ENCODE measurements at regions of chr7 and their contacts with region 1.

Region 1: DNA sequence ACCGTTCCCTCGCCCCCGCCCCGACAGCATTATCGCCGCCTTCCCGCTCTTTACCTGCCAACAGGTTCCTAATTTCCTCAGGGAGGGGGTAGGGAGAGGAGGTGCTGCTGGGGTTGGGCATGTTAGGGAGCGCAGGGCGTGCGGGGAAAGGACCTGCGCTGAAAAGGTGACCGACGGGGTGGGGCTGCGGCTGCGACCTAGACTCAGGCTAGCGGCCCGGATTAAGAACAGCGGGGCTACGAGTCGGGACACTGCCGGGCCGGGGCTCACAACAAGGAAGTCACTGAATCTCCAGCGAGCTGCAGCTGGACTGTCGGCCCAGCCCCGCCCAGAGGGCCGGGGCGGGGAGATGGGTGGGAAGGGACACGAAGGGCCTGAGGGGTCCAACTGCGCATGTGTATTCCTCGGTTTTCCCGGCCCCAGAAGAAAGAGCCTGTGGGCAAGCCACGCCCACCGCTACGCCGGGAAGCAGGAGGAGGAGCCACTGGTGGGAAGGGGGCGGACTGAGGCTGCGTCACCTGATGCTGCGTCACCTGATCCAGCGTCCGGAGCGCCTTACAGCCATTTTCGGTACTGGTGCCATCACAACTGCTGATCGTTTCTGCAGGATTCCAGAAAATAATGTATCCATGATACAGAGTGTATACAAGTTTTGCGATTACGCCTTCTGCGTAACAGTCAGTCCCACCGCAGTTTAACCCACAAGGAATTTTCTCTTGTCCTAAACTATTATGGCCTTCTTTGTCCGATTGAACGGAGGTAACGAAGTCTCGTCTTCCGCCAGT is at the start of gene SKAP2:
- DNase-seq: peak; percentile 83
- H3K4me3 Mint-ChIP-seq: peak within 1 kb of the TSS; percentile 93
- H3K27ac Mint-ChIP-seq: peak within 1 kb of the TSS; percentile 78
- H3K4me1 Mint-ChIP-seq: peaks cover 21% of the 10 kb centered on the region
- H3K27me3 Mint-ChIP-seq: peaks cover 29% of the 10 kb centered on the region
- total RNA-seq, gene SKAP2: 3.2 and 3.3 TPM in 2 replicates

Region 2: GRCh38 chr7:25527665-25528170 is 1336.8 kb before region 1 on chr7:
- intact Hi-C with region 1: no loop called
- DNase-seq: no peak
- H3K4me3 Mint-ChIP-seq: no peak overlapping the region
- H3K27ac Mint-ChIP-seq: no peak overlapping the region
- H3K4me1 Mint-ChIP-seq: peaks cover 8% of the 10 kb centered on the region
- H3K27me3 Mint-ChIP-seq: peaks cover 12% of the 10 kb centered on the region

Region 3: DNA sequence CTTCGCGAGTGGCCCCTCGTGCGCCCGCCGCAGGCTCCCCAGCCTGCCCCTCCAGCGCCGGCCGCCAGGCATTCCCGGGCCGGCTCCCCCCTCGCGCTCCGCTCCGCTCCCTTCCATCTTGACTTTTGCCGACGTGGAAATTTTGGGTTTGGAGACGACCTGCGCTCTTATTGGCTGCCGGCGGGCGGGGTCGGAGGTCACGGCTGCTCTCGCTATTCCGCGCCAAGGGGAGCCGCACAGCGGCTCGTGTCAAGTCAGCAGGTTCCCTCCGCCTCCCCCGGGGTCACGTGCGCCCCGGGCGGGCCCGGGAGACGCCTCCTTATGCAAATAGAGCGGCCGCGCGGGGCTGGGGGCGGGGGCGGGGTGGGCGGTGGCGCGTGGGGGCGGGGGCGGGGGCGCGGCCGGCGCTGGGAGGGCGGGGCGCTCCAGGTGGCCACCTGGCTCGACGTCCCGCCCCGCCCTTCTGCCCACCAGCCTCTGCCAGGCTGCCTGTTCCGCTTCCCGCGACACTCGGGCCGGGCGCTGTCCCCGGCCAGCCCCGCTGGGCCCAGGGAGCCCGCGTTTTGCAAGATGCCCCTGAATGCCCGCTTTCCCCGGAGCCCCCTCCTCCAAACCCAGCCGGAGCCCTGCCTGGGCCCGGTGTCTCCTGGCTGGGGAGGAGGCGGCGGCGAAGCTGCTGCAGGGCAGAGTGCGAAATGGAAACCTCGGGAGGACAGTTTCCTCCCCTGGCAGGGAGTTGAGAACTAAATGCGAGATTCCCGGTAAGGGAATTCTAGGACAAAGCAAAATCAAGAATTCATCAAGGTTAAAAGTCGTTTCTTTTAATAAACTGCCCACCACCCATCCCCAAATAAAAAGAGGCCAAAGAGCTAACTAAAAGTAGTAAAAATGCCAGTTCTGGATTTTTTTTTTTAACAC is 913.2 kb before region 1 on chr7:
- intact Hi-C with region 1: loop called (anchors 10 kb)
- DNase-seq: peak; percentile 87
- H3K4me3 Mint-ChIP-seq: peak overlapping the region; percentile 91
- H3K27ac Mint-ChIP-seq: peak overlapping the region; percentile 74
- H3K4me1 Mint-ChIP-seq: peaks cover 17% of the 10 kb centered on the region
- H3K27me3 Mint-ChIP-seq: peaks cover 5% of the 10 kb centered on the region

Region 4: DNA sequence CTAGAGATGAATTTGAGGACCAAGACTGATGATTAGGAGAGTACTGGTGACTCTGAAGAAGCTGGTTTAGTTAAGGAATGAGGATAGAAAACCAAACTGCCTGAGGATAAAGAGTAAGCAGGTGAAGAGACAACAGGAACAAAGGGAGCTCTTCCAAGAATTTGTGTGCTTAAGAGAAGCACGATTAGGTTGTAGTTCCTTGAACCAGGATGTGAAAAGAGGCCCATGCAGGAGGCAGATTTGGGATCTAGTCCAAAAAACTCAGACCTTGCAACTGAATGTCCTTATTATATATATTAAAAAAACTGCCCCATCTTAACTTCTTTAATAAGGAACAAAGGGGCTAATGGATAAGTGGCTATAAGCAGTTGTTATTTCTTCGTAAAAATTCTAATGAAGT is 150.5 kb before region 1 on chr7:
- intact Hi-C with region 1: no loop called
- DNase-seq: no peak
- H3K4me3 Mint-ChIP-seq: no peak overlapping the region
- H3K27ac Mint-ChIP-seq: no peak overlapping the region
- H3K4me1 Mint-ChIP-seq: no peaks in the 10 kb centered on the region
- H3K27me3 Mint-ChIP-seq: peaks cover 12% of the 10 kb centered on the region

Region 5: DNA sequence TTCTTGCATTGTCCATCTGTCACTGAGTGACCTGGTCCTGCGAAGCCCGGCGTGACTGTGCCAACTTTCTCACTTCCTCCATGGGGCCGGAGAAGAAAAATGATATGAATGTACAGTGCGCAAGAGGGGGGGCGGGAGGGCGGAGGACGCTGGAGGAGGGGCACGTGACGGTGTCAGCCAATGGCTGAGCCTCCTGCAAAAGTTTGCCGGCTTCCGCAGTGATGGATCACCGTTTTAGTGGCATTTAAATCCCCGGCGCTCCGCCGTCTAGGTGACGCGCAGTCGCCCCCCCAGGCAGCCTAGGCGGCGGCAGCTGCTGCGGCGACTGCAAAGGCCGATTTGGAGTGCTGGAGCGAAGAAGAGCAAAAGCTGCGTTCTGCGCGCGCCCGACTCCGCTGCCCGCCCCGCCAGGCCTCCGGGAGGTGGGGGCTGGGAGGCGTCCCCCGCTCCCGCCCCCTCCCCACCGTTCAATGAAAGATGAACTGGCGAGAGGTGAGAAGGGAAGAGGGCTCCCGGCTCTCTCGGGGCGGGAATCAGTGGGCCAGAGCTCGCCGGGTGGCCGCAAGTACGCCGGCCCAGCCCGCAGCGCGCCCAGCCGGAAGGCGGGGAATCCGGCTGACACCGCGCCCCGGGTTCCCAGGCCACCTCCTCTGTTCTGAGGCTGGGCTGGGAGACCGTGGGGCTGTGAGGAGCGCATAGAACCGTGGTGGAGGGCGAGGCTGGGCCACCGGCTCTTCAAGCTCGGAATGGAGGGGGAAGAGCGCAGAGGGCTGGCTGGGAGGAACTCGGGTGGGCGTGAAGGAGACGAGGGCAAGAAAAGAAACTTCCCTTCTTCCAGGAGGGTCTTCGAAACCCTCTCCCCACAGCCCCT is 231.6 kb after region 1 on chr7 and contains the start of gene HOXA1:
- intact Hi-C with region 1: loop called (anchors 2 kb)
- DNase-seq: peak; percentile 48
- H3K4me3 Mint-ChIP-seq: peak within 1 kb of the TSS; percentile 85
- H3K27ac Mint-ChIP-seq: peak within 1 kb of the TSS; percentile 73
- H3K4me1 Mint-ChIP-seq: peaks cover 18% of the 10 kb centered on the region
- H3K27me3 Mint-ChIP-seq: peaks cover 76% of the 10 kb centered on the region
- total RNA-seq, gene HOXA1: 0.16 and 0.24 TPM in 2 replicates

Region 6: DNA sequence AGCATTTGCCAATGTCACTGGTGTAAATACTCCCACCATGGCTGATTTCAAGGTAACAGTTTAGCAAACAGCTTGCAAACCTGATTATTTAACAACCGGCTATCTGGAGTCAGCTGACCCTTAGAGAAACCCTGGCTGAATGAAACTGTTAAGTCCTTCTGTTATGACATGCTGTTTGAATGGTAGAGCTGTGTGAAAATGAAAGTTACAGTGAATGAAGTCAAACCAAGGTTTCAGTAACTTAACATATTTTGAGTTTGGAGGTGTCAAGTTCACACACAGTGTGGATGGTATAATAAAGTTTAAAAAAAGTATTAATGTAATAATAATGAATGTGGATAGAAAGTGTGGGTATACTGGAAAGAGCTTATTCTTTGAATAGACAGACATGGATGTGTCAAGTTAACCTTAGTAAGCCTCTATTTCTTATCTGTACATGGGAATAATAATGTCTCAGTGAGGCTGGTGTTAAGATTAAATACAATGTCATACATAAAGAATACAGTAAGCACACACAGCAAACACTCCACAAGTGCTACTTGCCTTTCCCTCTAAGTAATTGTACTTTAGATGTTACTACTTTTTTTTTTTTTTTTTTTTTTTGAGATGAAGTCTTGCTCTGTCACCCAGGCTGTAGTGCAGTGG is 1025.8 kb after region 1 on chr7:
- intact Hi-C with region 1: loop called (anchors 10 kb)
- DNase-seq: no peak
- H3K4me3 Mint-ChIP-seq: no peak overlapping the region
- H3K27ac Mint-ChIP-seq: no peak overlapping the region
- H3K4me1 Mint-ChIP-seq: peaks cover 7% of the 10 kb centered on the region
- H3K27me3 Mint-ChIP-seq: peaks cover 3% of the 10 kb centered on the region

Measured in activated T-helper 1 cell treated with anti-CD3 and anti-CD28 coated beads, Interleukin-12 subunit alpha, Interleukin-12 subunit beta, Interleukin-2, Interleukin-4 antibody, amounts not matched to agents 30 ng/mL and 10 ng/mL and 1 ng/mL, durations not matched to agents 14 hours and 24 hours and 36 hours (primary cell).